Right ventricle myocardium inferior (tissue), 1 donor: ENCODE measurements at regions of chr16 and their contacts with region 1.

Region 1: GRCh38 chr16:83826146-83826913 is 18.6 kb downstream of the HSBP1 start:
- DNase-seq: peak; percentile 93
- ATAC-seq: peak; percentile 87

Region 2: DNA sequence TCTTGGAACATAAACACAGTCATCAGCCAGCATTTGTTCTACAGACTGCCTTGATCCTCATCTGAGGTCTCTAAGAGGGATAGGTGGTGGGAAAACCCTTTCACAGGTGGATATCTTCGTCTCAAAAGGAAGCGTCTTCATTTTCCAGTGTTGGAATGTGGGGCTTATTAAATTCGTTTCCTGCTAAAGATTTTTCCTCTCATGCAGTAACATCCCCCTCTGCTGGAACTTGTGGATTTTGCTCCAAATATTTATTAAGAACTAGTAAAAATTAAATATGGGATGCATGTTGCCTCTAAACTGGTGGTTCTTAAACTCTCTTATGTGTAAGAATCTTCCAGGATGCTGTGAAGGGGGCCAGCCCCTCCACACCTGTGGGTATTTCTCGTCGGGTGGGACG is 52.5 kb after region 1 on chr16:
- intact Hi-C with region 1: loop called (anchors 2 kb)
- DNase-seq: no peak
- ATAC-seq: no peak

Region 3: GRCh38 chr16:83913245-83913633 is 86.9 kb after region 1 on chr16:
- intact Hi-C with region 1: loop called (anchors 5 kb)
- DNase-seq: peak; percentile 86
- ATAC-seq: peak; percentile 91

Region 4: DNA sequence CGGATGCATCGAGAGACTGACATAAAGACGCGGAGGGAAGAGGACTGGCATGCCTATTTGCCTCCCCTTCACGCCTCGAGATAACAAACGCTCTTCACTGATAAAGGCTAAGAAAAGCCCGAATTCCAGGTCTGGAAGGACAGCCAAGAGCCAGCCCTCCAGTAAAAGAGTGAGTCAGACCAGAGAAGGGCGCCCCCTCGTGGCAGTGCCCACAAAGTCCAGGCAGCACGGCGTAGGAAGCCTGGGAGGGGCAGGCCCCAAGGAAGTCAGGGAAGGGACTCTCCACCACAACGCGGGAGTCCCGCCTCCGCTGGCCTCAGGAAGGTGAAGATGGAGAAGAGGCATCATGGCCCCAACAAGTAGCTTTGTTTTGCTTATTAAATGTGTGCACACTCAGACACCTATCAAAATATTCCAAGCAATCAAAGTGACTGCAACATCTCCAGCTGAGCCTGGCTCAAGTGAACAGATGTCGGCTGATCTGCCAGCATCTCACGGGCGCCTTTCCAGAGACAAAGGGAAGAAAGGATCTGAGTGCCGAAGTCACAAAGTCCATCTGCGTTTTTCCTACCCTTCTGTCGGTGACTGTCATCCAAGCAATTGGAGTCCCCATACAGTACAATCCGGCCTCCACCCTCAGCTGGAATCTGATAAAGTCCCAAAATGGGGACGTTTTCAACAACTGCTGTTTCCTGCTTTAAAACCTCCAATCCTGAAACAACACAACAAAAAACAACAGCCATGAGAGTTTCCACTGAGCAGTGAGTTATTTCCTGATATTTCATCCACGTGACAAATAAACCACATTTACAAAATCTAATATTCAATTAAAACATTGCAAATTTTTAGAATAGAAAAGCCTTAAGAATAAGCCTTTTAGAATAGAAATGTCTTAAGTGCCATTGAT is 236.7 kb after region 1 on chr16:
- intact Hi-C with region 1: loop called (anchors 5 kb)
- DNase-seq: peak; percentile 91
- ATAC-seq: peak; percentile 82

Region 5: DNA sequence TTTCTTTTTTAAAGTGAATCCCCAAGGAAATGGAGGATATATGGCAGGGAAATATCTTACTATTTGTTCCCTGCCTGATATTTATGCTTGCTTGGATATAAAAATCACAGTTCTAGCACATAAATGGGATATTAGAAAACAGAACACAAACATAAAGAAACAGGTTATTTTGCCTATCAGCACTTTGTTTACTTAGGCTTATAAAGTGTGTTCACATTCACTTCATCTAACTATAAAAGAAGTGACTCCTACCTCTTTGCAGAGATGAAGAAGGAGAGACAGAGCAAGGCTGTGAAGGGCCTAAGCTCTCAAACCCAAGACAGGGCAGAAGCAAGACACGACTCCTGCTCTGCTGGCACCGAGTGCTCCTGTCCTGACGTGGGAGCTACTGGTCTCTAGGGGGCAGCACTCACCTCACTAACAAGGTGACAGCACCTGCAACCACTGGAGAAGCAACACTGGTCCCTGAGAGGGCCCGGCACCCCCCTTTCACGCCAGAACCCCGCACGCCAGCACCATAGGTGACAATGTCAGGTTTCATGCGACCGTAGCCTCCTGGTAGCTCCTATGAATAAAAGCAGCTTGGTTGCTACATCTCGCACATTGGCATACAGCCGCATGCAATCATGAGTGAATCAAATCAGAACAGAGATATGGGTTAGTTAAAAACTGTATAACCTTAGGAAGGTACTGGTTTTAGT is 258.4 kb after region 1 on chr16:
- intact Hi-C with region 1: no loop called
- DNase-seq: peak; percentile 70
- ATAC-seq: peak; percentile 38